H1 (cell line): ENCODE measurements at regions of chr15 and their contacts with region 1.

Region 1: GRCh38 chr15:89129123-89129815 is 41.0 kb downstream of the ABHD2 start:
- DNase-seq: peak; percentile 33 to 80
- H3K4me3 ChIP-seq: no peak overlapping the region
- H3K27ac ChIP-seq: no peak overlapping the region
- H3K4me1 ChIP-seq: no peaks in the 10 kb centered on the region
- H3K27me3 ChIP-seq: no peaks in the 10 kb centered on the region
- CTCF ChIP-seq: peak; percentile 79 to 86 (median 84)
- EP300 ChIP-seq: no peak
- POLR2A ChIP-seq: no peak
- RAD21 ChIP-seq: peak; percentile 70 to 81

Region 2: DNA sequence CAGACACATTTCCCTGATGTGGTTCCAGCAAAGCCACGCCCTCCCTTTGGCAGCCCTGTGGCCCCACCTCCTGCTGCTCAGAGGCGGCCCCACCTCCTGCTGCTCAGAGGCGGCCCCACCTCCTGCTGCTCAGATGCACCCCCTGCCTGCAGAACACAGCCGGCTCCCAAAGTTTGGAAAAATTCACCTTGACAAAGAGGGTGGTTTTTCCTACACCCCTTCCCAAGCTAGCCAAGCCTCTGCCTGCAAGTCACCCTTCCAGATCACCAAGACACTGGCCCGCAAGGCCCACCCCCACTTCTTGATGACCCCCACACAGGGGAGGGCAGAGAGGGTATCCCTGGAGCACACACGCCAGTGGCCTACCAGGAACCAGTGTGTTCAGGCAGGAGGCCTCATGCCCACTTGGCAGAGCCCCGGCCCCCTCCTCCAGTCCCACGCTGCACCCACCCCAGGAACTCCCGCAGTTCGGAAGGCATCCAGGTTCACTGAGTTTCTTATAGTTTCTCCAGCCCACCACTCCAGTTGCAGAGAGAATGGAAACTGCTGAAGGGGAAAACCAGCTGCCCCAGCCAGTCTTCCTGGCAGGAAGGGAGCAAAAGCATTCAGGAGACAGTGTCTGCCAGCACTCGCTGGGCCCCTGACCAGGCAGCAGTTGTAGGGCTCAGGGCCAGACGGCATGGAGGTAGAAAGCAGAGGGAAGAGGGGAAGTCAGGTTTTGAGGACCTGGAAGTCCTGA is 231.6 kb before region 1 on chr15:
- CTCF ChIA-PET with region 1: interaction called, 3 read pairs
- POLR2A ChIA-PET with region 1: interaction called, 13 read pairs
- DNase-seq: peak in 1 of 2 experiments; percentile 63
- H3K4me3 ChIP-seq: no peak overlapping the region; a peak in 2 of 8 replicates
- H3K27ac ChIP-seq: no peak overlapping the region
- H3K4me1 ChIP-seq: peaks cover 0 to 37% (median 22%) of the 10 kb centered on the region in 4 experiments; a peak in 6 of 7 replicates
- H3K27me3 ChIP-seq: no peaks in the 10 kb centered on the region
- CTCF ChIP-seq: peak in 1 of 3 experiments; percentile 12; a peak in 1 of 4 replicates
- EP300 ChIP-seq: no peak
- POLR2A ChIP-seq: peak in 1 of 2 experiments; percentile 60; a peak in 1 of 3 replicates
- RAD21 ChIP-seq: no peak

Region 3: DNA sequence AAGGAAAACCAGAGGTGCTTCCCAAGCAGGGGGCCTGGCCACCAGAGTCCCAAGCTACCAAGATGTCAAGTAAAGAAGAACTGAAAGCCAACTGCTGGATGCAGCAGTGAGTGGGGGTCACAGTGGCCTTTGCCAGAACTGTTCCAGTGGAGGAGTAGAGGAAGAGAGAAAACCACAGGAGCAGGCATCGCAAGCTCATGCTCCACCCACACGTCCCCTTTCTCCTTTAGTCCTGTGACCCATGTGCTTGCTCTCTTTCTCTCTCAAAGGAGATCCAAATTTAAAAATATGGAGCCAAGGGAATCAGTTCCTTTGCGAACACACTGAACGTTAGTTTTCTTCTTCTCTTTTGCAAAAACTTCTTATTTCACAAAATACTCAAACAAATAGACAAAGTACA is 53.4 kb before region 1 on chr15:
- CTCF ChIA-PET with region 1: interaction called, 20 read pairs
- POLR2A ChIA-PET with region 1: interaction called, 3 read pairs
- DNase-seq: no peak
- H3K4me3 ChIP-seq: no peak overlapping the region
- H3K27ac ChIP-seq: no peak overlapping the region
- H3K4me1 ChIP-seq: peaks cover 0 to 3% (median 0%) of the 10 kb centered on the region in 4 experiments; a peak in 1 of 7 replicates
- H3K27me3 ChIP-seq: no peaks in the 10 kb centered on the region
- CTCF ChIP-seq: no peak
- EP300 ChIP-seq: no peak
- POLR2A ChIP-seq: no peak
- RAD21 ChIP-seq: no peak

Region 4: DNA sequence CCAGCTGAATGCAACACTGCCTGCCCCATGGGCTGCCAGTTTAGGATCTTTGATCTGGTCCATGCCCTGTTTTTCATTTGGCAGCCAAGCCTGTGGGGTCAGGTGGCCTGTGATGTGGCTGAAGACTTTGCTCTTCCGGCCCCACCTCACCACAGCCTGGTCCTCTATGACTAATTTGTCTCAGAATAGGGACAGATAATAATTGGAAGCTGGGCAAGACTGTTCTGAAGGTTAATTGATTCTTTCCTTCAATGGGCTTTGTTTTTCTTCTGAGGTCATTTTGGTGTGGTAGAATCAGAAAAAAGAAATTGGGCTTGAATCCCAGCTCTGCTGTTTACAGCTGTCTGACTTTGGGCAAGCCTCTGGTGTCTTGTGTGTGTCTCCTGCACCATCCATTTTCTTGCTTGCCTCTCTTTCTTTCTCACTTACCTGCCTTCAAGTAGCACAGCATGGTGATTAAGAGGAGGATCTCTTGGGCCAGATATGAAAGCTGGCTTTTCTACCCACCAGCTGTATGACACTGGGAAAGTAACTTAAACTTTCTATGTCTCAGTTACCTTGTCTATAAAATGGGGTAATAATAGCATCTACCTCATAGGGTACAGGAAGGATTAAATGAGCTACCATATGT is 16.8 kb before region 1 on chr15:
- CTCF ChIA-PET with region 1: interaction called, 112 read pairs
- POLR2A ChIA-PET with region 1: interaction called, 3 read pairs
- DNase-seq: no peak
- H3K4me3 ChIP-seq: no peak overlapping the region
- H3K27ac ChIP-seq: no peak overlapping the region
- H3K4me1 ChIP-seq: peaks cover 12 to 35% (median 16%) of the 10 kb centered on the region in 4 experiments
- H3K27me3 ChIP-seq: peaks cover 0 to 1% (median 0%) of the 10 kb centered on the region in 4 experiments; a peak in 1 of 7 replicates
- CTCF ChIP-seq: no peak
- EP300 ChIP-seq: no peak
- POLR2A ChIP-seq: no peak
- RAD21 ChIP-seq: no peak

Region 5: DNA sequence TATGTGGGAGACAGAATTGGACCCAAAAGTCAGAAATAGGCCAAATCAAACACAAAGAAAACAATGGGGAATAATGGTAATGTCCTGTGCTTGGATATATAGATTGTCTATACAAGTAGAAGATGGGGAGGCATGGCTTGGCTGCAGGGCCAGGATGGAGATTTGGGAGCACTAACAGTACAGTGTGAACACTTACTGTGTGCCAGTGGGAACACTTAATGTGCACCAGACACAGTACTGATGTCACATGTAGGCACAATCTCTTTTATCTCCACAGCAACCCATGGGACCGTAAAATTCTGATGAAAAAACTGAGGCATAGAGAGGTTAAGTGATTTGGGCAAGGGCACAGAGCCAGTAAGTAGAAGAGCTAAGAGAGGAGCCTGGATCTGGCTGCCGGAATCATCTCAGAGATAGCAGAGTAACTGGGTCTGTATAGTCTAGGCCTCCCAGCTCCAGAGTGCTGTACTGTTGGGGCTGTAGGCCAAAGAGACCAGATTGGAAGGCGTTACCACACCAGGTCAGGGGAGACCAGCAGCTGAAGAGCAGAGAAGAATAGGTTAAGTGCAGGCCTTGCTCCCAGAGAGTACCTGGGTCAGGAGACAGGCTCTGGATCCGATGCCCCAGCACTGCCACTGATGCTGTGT is 28.8 kb after region 1 on chr15:
- CTCF ChIA-PET with region 1: interaction called, 50 read pairs
- POLR2A ChIA-PET with region 1: interaction called, 3 read pairs
- DNase-seq: no peak
- H3K4me3 ChIP-seq: no peak overlapping the region
- H3K27ac ChIP-seq: no peak overlapping the region
- H3K4me1 ChIP-seq: no peaks in the 10 kb centered on the region
- H3K27me3 ChIP-seq: no peaks in the 10 kb centered on the region
- CTCF ChIP-seq: no peak
- EP300 ChIP-seq: no peak
- POLR2A ChIP-seq: no peak
- RAD21 ChIP-seq: no peak